ENCODE measurements at regions of chr16 and their contacts with region 1.

Region 1: DNA sequence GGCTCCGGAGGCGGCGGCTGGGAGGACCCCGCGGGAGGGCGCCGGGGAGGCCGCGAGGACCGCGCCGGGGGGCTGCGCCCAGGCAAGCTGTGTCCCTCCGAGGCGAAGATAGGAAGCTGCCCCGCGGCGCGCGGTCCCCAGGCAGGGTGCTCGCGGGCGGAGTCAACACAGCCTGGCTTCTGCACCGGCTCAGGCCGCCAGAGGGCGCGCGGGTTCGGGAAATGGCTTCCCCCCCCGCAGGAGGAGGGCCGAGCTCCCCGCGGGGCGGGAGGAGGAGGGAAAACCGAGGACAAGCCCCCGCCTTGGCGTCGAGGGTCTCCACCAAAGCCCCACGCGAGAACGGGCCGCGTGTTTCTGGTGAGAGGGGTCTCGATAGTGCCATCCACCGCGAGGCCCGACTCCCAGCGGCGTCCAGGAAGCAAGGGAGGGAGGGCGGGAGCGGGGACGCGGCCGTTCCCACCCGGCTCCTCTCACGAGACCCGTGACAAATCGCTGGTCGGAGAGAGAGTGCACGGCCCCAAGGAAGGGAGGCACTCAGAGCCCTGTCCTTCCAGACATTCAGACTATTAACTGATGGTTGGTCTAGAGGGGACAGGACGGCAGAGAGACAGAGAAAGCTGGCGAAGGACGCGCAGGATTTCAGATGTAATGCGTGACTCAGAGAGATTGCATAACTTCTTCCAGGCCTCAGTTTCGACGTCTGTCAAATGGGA is 64.4 kb upstream of the DNAJA2 start:
- DNase-seq: peak; percentile 90
- ATAC-seq: peak; percentile 98
- H3K4me3 ChIP-seq: peak overlapping the region; percentile 53 to 90 (median 63)
- H3K4me3 Mint-ChIP-seq: peak overlapping the region; percentile 90
- H3K27ac ChIP-seq: peak overlapping the region in 1 of 2 donors; percentile 52
- H3K27ac Mint-ChIP-seq: peak overlapping the region; percentile 68
- H3K4me1 ChIP-seq: peaks cover 3 to 26% of the 10 kb centered on the region in 2 donors
- H3K4me1 Mint-ChIP-seq: peaks cover 25% of the 10 kb centered on the region
- H3K27me3 ChIP-seq: no peaks in the 10 kb centered on the region
- H3K27me3 Mint-ChIP-seq: no peaks in the 10 kb centered on the region
- CTCF ChIP-seq: peak; percentile 95

Region 2: DNA sequence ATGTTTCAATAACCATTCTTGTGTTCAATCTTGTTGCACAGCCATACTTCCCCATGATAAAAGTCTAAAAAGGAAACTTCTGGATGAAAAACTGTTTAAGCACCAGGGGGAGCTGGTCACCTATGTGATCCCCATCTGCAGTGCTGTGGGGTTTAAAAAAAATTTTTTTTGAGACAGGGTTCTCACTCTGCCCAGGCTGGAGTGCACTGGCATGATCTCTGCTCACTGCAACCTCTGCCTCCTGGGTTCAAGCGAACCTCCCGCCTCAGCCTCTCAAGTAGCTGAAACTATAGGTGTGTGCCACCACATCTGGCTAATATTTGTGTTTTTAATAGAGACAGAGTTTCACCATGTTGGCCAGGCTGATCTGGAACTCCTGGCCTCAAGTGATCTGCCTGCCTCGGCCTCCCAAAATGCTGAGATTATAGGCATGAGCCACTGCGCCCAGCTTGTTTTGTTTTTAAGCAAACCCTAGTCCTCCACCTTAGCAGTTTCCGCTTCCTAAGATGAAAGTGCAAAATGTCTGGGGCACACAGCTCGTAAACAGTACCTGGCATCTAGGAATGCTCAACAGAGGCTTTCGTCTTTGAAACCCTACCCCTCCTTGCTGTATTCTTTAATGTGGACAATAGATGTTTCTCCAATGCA is 89.9 kb before region 1 on chr16:
- CTCF ChIA-PET with region 1: interaction called, 5 read pairs
- POLR2A ChIA-PET with region 1: no interaction called
- intact Hi-C with region 1: loop called (anchors 5 kb)
- DNase-seq: peak; percentile 68
- ATAC-seq: peak; percentile 63
- H3K4me3 ChIP-seq: no peak overlapping the region
- H3K4me3 Mint-ChIP-seq: no peak overlapping the region
- H3K27ac ChIP-seq: no peak overlapping the region
- H3K27ac Mint-ChIP-seq: no peak overlapping the region
- H3K4me1 ChIP-seq: peaks cover 0 to 3% of the 10 kb centered on the region in 2 donors
- H3K4me1 Mint-ChIP-seq: peaks cover 6% of the 10 kb centered on the region
- H3K27me3 ChIP-seq: no peaks in the 10 kb centered on the region
- H3K27me3 Mint-ChIP-seq: no peaks in the 10 kb centered on the region
- CTCF ChIP-seq: peak; percentile 75

Region 3: DNA sequence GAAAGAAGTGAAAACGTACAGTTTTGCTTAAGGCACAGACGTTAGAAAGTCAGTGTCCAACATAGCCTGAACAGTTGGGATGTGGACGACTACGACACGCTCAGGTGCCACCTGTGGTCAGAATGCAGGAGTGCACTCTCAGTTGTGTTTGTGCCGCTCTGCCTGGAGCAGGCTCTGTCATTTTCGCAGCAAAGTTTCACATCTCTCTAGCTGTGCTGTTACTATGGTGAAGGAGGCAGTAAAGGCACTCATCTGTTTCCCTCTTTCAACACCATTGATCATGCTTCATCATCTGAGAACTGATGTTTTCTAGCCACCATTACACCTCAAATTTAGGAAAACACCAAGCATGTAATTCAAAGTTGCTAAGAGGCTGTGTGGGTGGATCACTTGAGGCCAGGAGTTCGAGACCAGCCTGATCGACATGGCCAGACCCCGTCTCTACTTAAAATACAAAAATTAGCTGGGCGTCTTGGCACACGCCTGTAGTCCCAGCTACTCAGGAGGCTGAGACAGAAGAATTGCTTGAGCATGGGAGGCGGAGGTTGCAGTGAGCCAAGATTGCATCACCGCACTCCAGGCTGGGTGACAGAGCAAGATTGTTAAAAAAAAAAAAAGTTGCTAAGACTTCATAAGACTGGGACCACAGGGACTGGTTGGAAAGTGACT is 19.5 kb before region 1 on chr16:
- CTCF ChIA-PET with region 1: interaction called, 19 read pairs
- POLR2A ChIA-PET with region 1: no interaction called
- intact Hi-C with region 1: loop called (anchors 1 kb)
- DNase-seq: peak; percentile 91
- ATAC-seq: peak; percentile 99
- H3K4me3 ChIP-seq: no peak overlapping the region
- H3K4me3 Mint-ChIP-seq: peak overlapping the region; percentile 62
- H3K27ac ChIP-seq: peak overlapping the region; percentile 55 to 65
- H3K27ac Mint-ChIP-seq: peak overlapping the region; percentile 58
- H3K4me1 ChIP-seq: peaks cover 23 to 29% of the 10 kb centered on the region in 2 donors
- H3K4me1 Mint-ChIP-seq: peaks cover 24% of the 10 kb centered on the region
- H3K27me3 ChIP-seq: no peaks in the 10 kb centered on the region
- H3K27me3 Mint-ChIP-seq: no peaks in the 10 kb centered on the region
- CTCF ChIP-seq: peak; percentile 78

Region 4: GRCh38 chr16:47023945-47024344 is 14.0 kb before region 1 on chr16:
- CTCF ChIA-PET with region 1: interaction called, 19 read pairs
- POLR2A ChIA-PET with region 1: interaction called, 3 read pairs
- intact Hi-C with region 1: no loop called
- DNase-seq: no peak
- ATAC-seq: no peak
- H3K4me3 ChIP-seq: no peak overlapping the region
- H3K4me3 Mint-ChIP-seq: no peak overlapping the region
- H3K27ac ChIP-seq: no peak overlapping the region
- H3K27ac Mint-ChIP-seq: no peak overlapping the region
- H3K4me1 ChIP-seq: peaks cover 0 to 4% of the 10 kb centered on the region in 2 donors
- H3K4me1 Mint-ChIP-seq: peaks cover 4% of the 10 kb centered on the region
- H3K27me3 ChIP-seq: no peaks in the 10 kb centered on the region
- H3K27me3 Mint-ChIP-seq: no peaks in the 10 kb centered on the region
- CTCF ChIP-seq: no peak

Region 5: GRCh38 chr16:48156790-48157209 is 1118.9 kb after region 1 on chr16:
- CTCF ChIA-PET with region 1: interaction called, 24 read pairs
- POLR2A ChIA-PET with region 1: no interaction called
- intact Hi-C with region 1: no loop called
- DNase-seq: peak; percentile 82
- ATAC-seq: peak; percentile 49
- H3K4me3 ChIP-seq: no peak overlapping the region
- H3K4me3 Mint-ChIP-seq: no peak overlapping the region
- H3K27ac ChIP-seq: no peak overlapping the region
- H3K27ac Mint-ChIP-seq: no peak overlapping the region
- H3K4me1 ChIP-seq: peaks cover 0 to 6% of the 10 kb centered on the region in 2 donors
- H3K4me1 Mint-ChIP-seq: no peaks in the 10 kb centered on the region
- H3K27me3 ChIP-seq: peaks cover 0 to 10% (median 2%) of the 10 kb centered on the region in 4 experiments
- H3K27me3 Mint-ChIP-seq: peaks cover 28% of the 10 kb centered on the region
- CTCF ChIP-seq: peak; percentile 95

Region 6: DNA sequence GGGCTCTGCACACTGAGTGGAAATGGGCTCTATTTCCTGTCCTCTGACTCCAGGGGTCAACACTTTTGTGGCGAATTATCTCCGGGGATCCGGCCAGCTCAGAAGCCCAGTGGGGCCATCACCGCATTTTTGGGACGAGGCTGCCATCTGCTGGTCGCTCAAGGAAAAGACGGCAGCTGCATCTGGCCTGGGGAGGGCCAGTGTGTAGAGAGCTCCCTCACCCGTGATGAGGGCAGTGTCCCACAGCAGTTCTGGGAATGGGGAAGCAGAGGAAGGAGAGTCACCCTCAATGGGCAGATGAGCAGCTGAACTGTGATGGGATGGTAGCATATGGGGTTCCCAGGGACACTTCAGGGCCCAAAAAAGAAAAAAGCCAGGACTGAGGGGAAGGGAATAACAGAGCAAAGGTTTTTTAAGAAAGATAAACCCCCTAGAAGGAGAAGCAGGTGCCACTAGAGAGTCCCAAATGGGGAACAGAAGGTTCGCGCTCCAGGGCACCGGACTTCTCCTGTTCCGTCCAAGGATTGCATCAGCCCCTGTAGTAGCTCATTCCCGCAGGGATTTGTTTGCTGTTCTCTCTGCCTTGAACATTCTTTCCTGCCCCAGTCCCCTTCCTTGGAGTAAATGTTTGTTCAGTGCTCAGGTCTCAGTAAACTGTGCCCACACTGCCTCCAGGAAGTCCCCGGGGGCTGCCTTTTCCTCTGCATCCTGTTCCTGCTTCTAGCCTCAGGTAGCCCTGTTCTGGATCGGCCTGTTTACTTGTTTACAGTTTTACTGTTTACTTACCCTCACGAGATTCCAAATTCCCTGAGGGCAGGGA is 1127.2 kb after region 1 on chr16:
- CTCF ChIA-PET with region 1: interaction called, 31 read pairs
- POLR2A ChIA-PET with region 1: no interaction called
- intact Hi-C with region 1: loop called (anchors 2 kb)
- DNase-seq: peak; percentile 75
- ATAC-seq: peak; percentile 90
- H3K4me3 ChIP-seq: no peak overlapping the region
- H3K4me3 Mint-ChIP-seq: no peak overlapping the region
- H3K27ac ChIP-seq: no peak overlapping the region
- H3K27ac Mint-ChIP-seq: peak overlapping the region; percentile 27
- H3K4me1 ChIP-seq: peaks cover 0 to 2% of the 10 kb centered on the region in 2 donors
- H3K4me1 Mint-ChIP-seq: peaks cover 3% of the 10 kb centered on the region
- H3K27me3 ChIP-seq: no peaks in the 10 kb centered on the region
- H3K27me3 Mint-ChIP-seq: no peaks in the 10 kb centered on the region
- CTCF ChIP-seq: peak; percentile 90

Measured in B cell (primary cell).